SK-N-SH (cell line): ENCODE measurements at regions of chr15 and their contacts with region 1.

Region 1: DNA sequence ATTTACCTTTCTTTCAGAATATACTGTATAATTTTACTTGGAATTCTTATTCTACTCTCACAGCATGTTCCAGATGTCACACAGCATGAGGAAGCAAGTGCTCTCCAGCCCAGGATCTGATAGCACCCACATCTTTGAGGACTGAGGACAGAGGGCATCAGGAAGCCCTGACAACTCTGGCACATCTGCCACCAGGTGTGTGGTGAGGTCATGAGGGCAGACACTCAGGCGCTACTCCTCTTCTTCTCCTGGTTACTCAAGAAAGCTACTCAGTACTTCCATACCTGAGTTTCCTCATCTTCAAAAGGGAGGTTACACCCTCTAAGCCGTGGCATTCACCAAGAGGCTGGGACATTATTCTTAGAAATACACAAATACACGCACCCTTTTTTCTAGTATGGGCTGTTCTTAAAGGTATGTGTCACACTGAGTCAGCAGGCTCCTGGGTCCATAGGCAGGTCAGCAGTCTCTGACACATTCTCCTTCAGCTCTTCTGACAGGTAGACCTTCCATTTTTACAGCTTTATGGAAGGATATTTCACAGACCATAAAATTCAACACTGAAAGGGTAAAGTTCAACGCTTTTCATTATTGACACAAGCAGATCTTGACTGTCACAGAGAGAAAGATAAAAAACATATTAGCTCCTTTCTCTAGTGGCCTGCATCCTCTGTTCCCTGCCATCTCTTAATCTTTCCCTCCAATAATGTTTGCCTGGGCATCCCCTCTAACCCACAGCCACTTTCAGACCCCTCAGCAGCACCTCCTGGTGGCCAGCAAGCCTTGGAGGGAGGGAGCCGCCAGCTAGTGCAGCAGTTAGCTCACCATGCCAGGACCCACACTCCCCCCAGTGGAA is 103.2 kb upstream of the TJP1 start:
- DNase-seq: peak; percentile 79
- H3K4me3 ChIP-seq: no peak overlapping the region; a peak in 1 of 4 replicates
- H3K27ac ChIP-seq: no peak overlapping the region
- H3K4me1 ChIP-seq: no peaks in the 10 kb centered on the region; a peak in 1 of 4 replicates
- H3K27me3 ChIP-seq: no peaks in the 10 kb centered on the region
- CTCF ChIP-seq: peak; percentile 86
- EP300 ChIP-seq: no peak
- RAD21 ChIP-seq: peak; percentile 83

Region 2: GRCh38 chr15:29668120-29668602 is 257.3 kb before region 1 on chr15:
- CTCF ChIA-PET with region 1: interaction called, 12 read pairs
- POLR2A ChIA-PET with region 1: no interaction called
- DNase-seq: peak; percentile 82
- H3K4me3 ChIP-seq: peak overlapping the region in 1 of 2 experiments; percentile 38; a peak in 1 of 4 replicates
- H3K27ac ChIP-seq: no peak overlapping the region
- H3K4me1 ChIP-seq: peaks cover 0 to 23% of the 10 kb centered on the region in 2 experiments; a peak in 2 of 4 replicates
- H3K27me3 ChIP-seq: no peaks in the 10 kb centered on the region
- CTCF ChIP-seq: peak; percentile 97
- EP300 ChIP-seq: no peak
- RAD21 ChIP-seq: peak; percentile 96

Region 3: DNA sequence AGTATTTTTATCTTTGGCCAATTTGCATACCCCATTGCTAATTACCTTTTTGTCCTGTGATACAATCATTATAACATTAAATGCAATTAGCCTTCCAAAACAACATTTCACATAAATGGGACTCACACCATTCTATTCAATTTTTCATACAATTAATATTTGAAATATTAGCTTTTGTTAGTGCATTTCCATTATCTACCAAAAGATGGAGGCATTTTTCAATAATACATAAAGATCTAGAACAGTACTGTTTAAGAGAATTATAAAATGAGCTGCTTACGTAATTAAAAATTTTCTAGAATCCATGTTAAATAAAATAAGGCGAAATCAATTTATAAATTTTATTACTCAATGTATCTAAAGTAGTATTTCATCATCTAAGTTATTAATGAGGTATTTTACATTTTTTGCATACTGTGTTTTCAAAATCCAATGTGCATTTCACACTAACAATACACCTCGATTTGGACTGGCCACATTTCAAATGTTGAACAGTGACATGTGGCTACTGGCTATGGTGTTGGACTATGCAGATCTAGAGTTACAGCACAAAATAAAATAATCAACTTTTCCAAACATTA is 177.5 kb before region 1 on chr15:
- CTCF ChIA-PET with region 1: interaction called, 104 read pairs
- POLR2A ChIA-PET with region 1: interaction called, 3 read pairs
- DNase-seq: peak; percentile 17
- H3K4me3 ChIP-seq: no peak overlapping the region
- H3K27ac ChIP-seq: no peak overlapping the region
- H3K4me1 ChIP-seq: no peaks in the 10 kb centered on the region; a peak in 1 of 4 replicates
- H3K27me3 ChIP-seq: no peaks in the 10 kb centered on the region
- CTCF ChIP-seq: peak; percentile 77
- EP300 ChIP-seq: no peak
- RAD21 ChIP-seq: peak; percentile 61

Region 4: DNA sequence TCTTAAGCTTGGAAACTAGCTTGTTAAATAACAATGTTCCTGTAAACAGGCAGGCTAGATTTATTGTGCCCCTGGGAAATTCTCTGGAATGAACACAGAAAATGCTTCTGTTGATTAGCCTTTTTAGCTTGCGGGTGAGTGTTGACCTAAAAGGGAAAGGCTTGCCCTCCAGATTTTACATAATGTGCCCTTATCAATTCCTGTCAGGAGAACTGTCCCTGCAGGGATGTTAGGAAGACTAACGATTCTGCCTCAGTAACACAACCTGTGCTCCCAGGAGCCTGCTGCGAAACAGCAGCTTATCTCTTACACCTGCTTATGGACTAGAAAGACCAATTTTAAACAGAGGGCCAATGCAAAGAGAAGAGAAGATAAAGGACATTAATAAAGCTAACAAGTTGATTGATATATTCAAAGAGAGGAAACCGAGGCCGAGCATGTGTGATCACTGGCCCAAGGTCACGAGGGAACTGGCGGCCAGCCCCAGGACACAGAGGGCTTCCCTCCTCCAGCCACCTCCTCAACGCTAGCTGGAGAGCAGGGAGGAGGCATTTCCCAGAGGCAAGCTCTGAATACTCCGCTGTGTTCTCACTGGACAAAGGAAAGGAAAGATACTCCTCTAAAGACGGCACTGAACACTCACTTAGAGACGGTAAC is 54.8 kb before region 1 on chr15:
- CTCF ChIA-PET with region 1: interaction called, 11 read pairs
- POLR2A ChIA-PET with region 1: no interaction called
- DNase-seq: peak; percentile 41
- H3K4me3 ChIP-seq: no peak overlapping the region
- H3K27ac ChIP-seq: peak overlapping the region in 1 of 2 experiments; percentile 47; a peak in 2 of 4 replicates
- H3K4me1 ChIP-seq: peaks cover 0 to 10% of the 10 kb centered on the region in 2 experiments; a peak in 2 of 4 replicates
- H3K27me3 ChIP-seq: no peaks in the 10 kb centered on the region; the same call in 1 of the 2 replicates
- CTCF ChIP-seq: no peak
- EP300 ChIP-seq: peak in 1 of 2 experiments; percentile 47; a peak in 1 of 4 replicates
- RAD21 ChIP-seq: no peak

Region 5: DNA sequence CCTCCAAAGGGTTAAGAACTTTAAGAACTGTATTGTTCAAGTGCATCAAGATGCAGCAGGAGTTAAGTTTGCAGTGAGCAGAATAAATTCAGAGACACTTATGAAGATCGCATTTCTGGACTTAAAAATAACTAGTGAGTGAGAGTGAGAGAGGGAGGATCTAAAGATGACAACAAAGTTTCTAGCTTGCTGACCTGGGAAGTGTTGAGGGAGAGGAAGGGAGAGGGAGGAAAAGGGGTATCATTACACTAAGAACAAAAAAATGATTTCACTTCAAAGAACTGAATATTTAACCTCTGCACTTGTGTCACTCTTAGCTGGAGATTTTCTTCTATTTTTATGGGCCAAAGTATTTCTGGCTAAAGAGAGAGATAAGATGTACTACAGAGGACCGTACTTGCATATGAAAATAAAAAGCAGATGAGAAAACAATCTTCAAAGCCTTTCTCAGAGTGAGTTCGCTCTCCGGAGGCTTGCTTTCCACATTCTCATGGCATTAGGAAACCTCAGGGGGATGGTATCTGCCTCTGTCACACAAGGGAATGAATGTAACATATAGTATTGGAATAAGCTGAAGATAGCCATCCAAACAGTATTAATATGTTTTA is 11.8 kb before region 1 on chr15:
- CTCF ChIA-PET with region 1: interaction called, 19 read pairs
- POLR2A ChIA-PET with region 1: no interaction called
- DNase-seq: no peak
- H3K4me3 ChIP-seq: no peak overlapping the region
- H3K27ac ChIP-seq: no peak overlapping the region
- H3K4me1 ChIP-seq: no peaks in the 10 kb centered on the region; a peak in 1 of 4 replicates
- H3K27me3 ChIP-seq: no peaks in the 10 kb centered on the region
- CTCF ChIP-seq: no peak
- EP300 ChIP-seq: no peak
- RAD21 ChIP-seq: no peak

Region 6: GRCh38 chr15:30030350-30030749 is 104.9 kb after region 1 on chr15:
- CTCF ChIA-PET with region 1: no interaction called
- POLR2A ChIA-PET with region 1: no interaction called
- DNase-seq: no peak
- H3K4me3 ChIP-seq: no peak overlapping the region
- H3K27ac ChIP-seq: no peak overlapping the region
- H3K4me1 ChIP-seq: no peaks in the 10 kb centered on the region
- H3K27me3 ChIP-seq: no peaks in the 10 kb centered on the region
- CTCF ChIP-seq: no peak
- EP300 ChIP-seq: no peak
- RAD21 ChIP-seq: no peak

Region 7: GRCh38 chr15:30073915-30074314 is 148.5 kb after region 1 on chr15:
- CTCF ChIA-PET with region 1: interaction called, 15 read pairs
- POLR2A ChIA-PET with region 1: no interaction called
- DNase-seq: no peak
- H3K4me3 ChIP-seq: no peak overlapping the region
- H3K27ac ChIP-seq: no peak overlapping the region
- H3K4me1 ChIP-seq: no peaks in the 10 kb centered on the region; a peak in 1 of 4 replicates
- H3K27me3 ChIP-seq: peaks cover 6% of the 10 kb centered on the region; the same call in 1 of the 2 replicates
- CTCF ChIP-seq: no peak
- EP300 ChIP-seq: no peak
- RAD21 ChIP-seq: no peak